Kidney (tissue), 22 donors: ENCODE measurements at regions of chr18 and their contacts with region 1.

Region 1: DNA sequence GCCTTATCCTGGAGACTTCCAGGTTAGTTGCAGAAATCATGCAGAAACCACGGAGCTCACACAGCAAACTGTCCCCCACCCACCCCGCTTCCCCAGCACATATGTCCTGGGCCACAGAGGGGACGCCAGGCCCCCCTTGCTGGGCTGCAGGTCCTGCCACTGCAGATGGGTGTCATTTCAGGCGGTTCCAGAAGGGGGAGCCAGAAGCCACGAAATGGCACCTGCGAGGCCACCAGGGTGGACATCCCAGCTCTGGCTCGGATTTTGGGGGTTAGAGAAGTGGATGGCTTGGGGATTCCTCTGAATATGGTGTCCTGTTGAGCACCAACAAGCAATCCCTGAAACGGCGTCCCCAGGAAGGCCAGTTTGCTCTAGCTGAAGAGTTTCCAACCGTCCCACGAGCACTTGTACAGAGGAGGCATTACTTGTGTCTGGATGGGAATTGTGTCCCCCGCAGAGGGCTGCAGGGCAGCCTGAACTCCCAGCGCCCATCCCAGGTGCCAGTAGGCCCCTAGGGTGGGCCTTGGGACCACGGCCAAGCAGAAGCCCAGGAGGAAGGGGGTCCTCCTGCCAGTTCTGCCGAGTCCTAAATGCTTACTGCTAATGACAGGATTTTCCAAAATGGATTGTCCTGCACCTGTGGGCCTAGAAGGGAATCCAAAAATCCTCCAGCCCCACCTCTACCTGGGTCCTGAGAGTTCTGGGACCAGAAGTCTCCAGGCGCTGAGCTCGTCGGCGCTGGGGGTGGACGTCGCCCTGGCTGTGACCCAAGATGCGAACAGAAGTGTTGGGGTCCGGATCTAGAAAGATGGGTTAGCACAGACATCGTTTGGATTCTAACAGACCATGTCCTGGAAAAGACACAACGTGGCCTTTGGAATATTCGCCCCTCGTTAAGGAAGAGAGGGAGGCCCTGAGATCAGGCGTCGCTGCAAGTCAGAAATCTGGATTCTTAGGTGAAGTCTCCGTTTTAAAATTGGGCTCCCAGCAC is 14.6 kb upstream of the NFATC1 start:
- DNase-seq: peak; percentile 65 to 88 (median 77)
- H3K4me3 ChIP-seq: no peak overlapping the region
- H3K27ac ChIP-seq: no peak overlapping the region
- H3K4me1 ChIP-seq: no peaks in the 10 kb centered on the region
- H3K27me3 ChIP-seq: no peaks in the 10 kb centered on the region
- CTCF ChIP-seq: peak; percentile 86

Region 2: DNA sequence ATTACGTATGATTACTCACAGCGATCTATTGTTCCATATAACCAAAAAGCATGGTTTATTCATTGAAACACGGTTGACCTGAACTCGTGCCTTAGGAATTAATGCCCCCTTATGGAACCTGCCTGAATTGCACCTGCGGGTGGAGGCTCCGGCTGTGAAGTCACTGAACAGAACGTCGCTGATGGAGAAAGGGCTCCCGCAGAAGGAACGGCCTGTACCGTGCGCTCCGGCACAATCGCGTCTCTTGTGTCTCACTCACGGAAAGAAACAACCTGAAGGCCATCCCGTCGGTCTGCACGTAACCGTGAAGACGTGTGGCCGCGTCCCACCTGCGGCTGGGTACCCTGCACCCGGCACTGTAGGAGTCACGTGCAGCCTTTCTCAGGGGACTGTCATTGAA is 147.7 kb after region 1 on chr18:
- intact Hi-C with region 1: loop called (anchors 2 kb)
- DNase-seq: peak; percentile 71 to 90 (median 84)
- H3K4me3 ChIP-seq: no peak overlapping the region
- H3K27ac ChIP-seq: no peak overlapping the region
- H3K4me1 ChIP-seq: no peaks in the 10 kb centered on the region
- H3K27me3 ChIP-seq: peaks cover 2% of the 10 kb centered on the region
- CTCF ChIP-seq: peak; percentile 82

Region 3: DNA sequence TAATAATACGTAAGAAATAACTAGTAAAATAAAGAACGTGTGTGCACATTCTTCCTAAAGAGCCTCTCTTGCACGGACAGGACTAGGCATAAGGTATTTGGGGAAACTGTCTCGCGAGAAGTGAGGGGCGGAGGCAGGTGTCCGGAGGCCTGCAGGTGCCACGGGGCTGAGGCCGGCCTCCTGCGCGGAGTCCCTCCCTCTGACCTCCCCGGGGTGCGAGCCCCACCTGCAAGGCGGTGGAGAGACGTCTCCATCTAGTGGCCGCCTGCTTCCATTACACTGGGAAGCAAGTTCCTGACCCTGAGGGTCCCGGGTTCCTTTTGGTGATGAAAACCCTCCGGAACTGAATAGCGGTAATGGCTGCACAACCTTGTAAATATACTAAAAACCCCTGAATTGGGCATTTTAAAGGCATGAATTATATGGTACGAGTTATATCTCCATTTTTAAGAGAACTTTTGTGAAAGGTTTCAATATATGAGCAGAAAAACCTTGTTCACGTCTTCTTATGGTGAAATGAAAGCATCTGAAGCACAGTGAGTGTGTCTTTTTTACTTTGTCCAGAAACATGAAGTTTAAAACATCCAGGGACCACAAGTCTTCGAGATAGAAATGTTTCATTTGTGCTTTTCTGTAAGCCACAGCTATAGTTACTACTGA is 263.0 kb after region 1 on chr18:
- intact Hi-C with region 1: loop called (anchors 5 kb)
- DNase-seq: peak; percentile 48 to 82 (median 73)
- H3K4me3 ChIP-seq: no peak overlapping the region
- H3K27ac ChIP-seq: no peak overlapping the region
- H3K4me1 ChIP-seq: no peaks in the 10 kb centered on the region
- H3K27me3 ChIP-seq: no peaks in the 10 kb centered on the region
- CTCF ChIP-seq: peak; percentile 66